IMR-90 (cell line): ENCODE measurements at regions of chr2 and their contacts with region 1.

Region 1: GRCh38 chr2:72638600-72639194 is 187.1 kb downstream of the EXOC6B start:
- DNase-seq: no peak
- ATAC-seq: no peak
- H3K4me3 ChIP-seq: no peak overlapping the region
- H3K27ac ChIP-seq: no peak overlapping the region
- H3K4me1 ChIP-seq: no peaks in the 10 kb centered on the region
- H3K27me3 ChIP-seq: no peaks in the 10 kb centered on the region
- CTCF ChIP-seq: no peak
- POLR2A ChIP-seq: no peak
- RAD21 ChIP-seq: no peak

Region 2: GRCh38 chr2:72619626-72620025 is 19.1 kb before region 1 on chr2:
- CTCF ChIA-PET with region 1: interaction called, 3 read pairs
- POLR2A ChIA-PET with region 1: interaction called, 14 read pairs
- dilution Hi-C with region 1: no loop called
- in situ Hi-C with region 1: no loop called
- intact Hi-C with region 1: no loop called
- DNase-seq: no peak
- ATAC-seq: no peak
- H3K4me3 ChIP-seq: no peak overlapping the region
- H3K27ac ChIP-seq: no peak overlapping the region
- H3K4me1 ChIP-seq: no peaks in the 10 kb centered on the region
- H3K27me3 ChIP-seq: no peaks in the 10 kb centered on the region
- CTCF ChIP-seq: no peak
- POLR2A ChIP-seq: no peak
- RAD21 ChIP-seq: no peak

Region 3: GRCh38 chr2:72694715-72695496 is 56.2 kb after region 1 on chr2:
- CTCF ChIA-PET with region 1: no interaction called
- POLR2A ChIA-PET with region 1: no interaction called
- dilution Hi-C with region 1: no loop called
- in situ Hi-C with region 1: no loop called
- intact Hi-C with region 1: no loop called
- DNase-seq: peak; percentile 67
- ATAC-seq: peak; percentile 83
- H3K4me3 ChIP-seq: no peak overlapping the region
- H3K27ac ChIP-seq: peak overlapping the region; percentile 24; the same call in 1 of the 2 replicates
- H3K4me1 ChIP-seq: peaks cover 5% of the 10 kb centered on the region
- H3K27me3 ChIP-seq: no peaks in the 10 kb centered on the region
- CTCF ChIP-seq: no peak
- POLR2A ChIP-seq: no peak
- RAD21 ChIP-seq: no peak